Endothelial cell of umbilical vein (primary cell): ENCODE measurements at regions of chr9 and their contacts with region 1.

Region 1: DNA sequence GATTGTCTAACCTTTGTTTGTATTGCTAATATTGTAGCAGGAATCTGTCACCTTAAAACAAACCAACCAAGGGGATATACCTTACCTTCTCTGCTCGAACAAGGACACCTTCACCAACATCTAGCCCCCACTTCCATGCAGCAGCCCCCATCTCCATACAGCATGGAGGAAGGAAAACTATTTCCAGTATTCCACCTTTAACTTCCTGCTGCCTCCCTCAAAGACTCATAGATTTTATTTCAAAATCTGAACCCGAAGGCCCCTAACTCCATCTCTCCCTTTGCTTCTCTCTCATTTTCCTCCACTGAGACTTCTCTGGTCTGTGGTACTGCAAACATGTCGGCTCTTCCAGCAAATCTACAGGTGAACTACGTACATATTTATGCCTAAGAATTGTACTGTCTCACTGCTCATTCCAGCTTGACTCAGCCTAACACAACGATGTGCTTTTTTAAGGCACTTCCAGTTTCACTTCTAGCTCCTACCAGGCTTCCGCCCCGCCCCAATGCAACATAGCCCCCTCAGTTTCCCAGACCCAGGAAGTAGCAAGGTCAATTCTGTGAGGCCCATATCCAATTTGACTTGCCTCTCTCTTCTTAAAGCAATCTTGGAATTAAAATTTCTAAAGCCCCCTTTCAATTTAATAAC is 70.7 kb upstream of the RNF38 start:
- DNase-seq: peak; percentile 65
- H3K4me3 ChIP-seq: peak overlapping the region in 2 of 3 experiments; percentile 23 to 56
- H3K27ac ChIP-seq: peak overlapping the region; percentile 15
- H3K4me1 ChIP-seq: peaks cover 15% of the 10 kb centered on the region
- H3K27me3 ChIP-seq: no peaks in the 10 kb centered on the region
- CTCF ChIP-seq: no peak
- POLR2A ChIP-seq: no peak

Region 2: GRCh38 chr9:36487482-36488388 is 17.0 kb after region 1 on chr9:
- CTCF ChIA-PET with region 1: interaction called, 11 read pairs
- POLR2A ChIA-PET with region 1: no interaction called
- dilution Hi-C with region 1: no loop called
- intact Hi-C with region 1: no loop called
- DNase-seq: peak; percentile 88
- H3K4me3 ChIP-seq: peak overlapping the region; percentile 67 to 89 (median 75)
- H3K27ac ChIP-seq: peak overlapping the region; percentile 81
- H3K4me1 ChIP-seq: peaks cover 23% of the 10 kb centered on the region
- H3K27me3 ChIP-seq: no peaks in the 10 kb centered on the region
- CTCF ChIP-seq: peak in 1 of 2 donors; percentile 6
- POLR2A ChIP-seq: peak; percentile 82

Region 3: DNA sequence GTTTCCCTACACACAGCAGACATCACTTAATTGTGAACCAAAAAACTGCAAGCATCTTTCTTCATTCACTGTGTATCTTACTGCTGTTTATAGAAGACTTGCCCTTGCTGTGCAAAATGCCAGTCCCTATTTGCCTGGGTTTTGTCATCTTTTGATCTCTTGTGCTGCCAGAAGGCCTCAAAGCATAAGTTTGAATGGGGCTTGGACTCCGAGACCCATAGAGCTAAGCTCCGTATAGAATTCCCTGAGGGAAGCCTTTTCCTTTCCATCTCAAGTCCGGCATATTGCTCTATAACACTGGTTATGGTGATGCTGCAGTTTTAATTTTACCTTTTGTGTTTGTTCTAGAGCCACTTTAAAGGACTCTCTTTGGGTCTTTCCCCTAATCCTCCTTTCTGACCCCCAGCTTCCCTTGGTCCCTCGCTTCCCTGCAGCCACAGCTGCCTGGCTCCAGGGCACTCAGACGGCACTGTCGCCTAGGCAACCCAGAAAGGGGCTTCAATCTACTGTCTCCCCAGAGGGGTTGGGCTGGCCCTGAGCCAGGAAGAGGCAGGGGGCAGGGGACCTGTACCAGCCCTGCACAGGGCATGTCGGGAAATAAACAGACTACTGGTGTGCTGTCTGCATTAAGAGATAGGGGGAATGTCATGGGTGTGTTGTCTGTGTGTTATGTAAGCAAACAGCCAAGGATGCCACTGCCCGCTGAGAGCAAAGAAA is 28.6 kb after region 1 on chr9:
- CTCF ChIA-PET with region 1: no interaction called
- POLR2A ChIA-PET with region 1: no interaction called
- dilution Hi-C with region 1: no loop called
- intact Hi-C with region 1: no loop called
- DNase-seq: no peak
- H3K4me3 ChIP-seq: no peak overlapping the region
- H3K27ac ChIP-seq: no peak overlapping the region
- H3K4me1 ChIP-seq: no peaks in the 10 kb centered on the region
- H3K27me3 ChIP-seq: peaks cover 4 to 16% of the 10 kb centered on the region in 2 experiments
- CTCF ChIP-seq: no peak
- POLR2A ChIP-seq: no peak

Region 4: DNA sequence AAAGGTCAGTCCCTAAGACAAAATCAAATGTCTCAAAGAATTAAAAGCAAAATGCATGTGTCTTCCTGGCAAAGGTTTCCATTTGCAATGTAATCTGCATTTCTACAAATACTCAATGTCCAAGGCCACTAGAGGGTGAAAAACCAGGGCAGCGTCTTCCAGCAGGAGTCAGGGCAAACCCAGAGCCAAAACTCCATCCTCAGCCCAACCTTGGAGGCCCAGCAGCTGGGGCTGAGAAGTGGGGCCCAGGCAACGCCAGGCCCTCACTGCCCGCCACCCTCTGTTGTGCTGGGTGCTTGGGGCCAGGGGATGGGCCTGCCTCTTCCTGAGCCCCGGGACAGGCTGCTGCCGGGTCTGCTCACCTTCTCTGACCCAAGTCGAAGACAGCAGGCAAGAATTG is 363.2 kb after region 1 on chr9:
- CTCF ChIA-PET with region 1: no interaction called
- POLR2A ChIA-PET with region 1: no interaction called
- dilution Hi-C with region 1: no loop called
- intact Hi-C with region 1: no loop called
- DNase-seq: no peak
- H3K4me3 ChIP-seq: no peak overlapping the region
- H3K27ac ChIP-seq: no peak overlapping the region
- H3K4me1 ChIP-seq: no peaks in the 10 kb centered on the region
- H3K27me3 ChIP-seq: peaks cover 2 to 8% of the 10 kb centered on the region in 2 experiments
- CTCF ChIP-seq: no peak
- POLR2A ChIP-seq: no peak